ENCODE measurements at regions of chr17 and their contacts with region 1.

Region 1: DNA sequence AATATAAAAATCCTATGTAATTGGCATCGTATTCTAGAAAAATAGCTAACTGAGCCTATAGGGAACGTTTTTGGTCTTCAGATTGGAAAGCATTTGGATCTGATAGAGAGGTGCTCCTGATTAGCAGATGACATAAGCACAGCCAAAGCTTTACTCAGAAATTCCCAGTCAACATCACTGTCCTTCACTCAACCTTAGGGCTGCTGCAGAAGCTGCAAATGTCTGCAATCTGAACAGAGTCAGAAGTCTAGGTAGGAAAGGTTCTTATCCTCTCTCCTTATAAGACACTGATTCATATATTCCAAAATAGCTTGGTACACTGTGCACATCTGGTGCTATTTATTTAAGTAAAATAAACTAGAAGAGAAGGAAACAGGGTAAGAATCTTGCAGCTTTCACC is 19.2 kb downstream of the STRADA start:
- DNase-seq: peak; percentile 25
- H3K4me3 ChIP-seq: no peak overlapping the region
- H3K27ac ChIP-seq: no peak overlapping the region
- H3K4me1 ChIP-seq: peaks cover 0 to 5% of the 10 kb centered on the region in 2 experiments; a peak in 2 of 4 replicates
- H3K27me3 ChIP-seq: no peaks in the 10 kb centered on the region
- CTCF ChIP-seq: no peak
- EP300 ChIP-seq: no peak
- RAD21 ChIP-seq: no peak

Region 2: DNA sequence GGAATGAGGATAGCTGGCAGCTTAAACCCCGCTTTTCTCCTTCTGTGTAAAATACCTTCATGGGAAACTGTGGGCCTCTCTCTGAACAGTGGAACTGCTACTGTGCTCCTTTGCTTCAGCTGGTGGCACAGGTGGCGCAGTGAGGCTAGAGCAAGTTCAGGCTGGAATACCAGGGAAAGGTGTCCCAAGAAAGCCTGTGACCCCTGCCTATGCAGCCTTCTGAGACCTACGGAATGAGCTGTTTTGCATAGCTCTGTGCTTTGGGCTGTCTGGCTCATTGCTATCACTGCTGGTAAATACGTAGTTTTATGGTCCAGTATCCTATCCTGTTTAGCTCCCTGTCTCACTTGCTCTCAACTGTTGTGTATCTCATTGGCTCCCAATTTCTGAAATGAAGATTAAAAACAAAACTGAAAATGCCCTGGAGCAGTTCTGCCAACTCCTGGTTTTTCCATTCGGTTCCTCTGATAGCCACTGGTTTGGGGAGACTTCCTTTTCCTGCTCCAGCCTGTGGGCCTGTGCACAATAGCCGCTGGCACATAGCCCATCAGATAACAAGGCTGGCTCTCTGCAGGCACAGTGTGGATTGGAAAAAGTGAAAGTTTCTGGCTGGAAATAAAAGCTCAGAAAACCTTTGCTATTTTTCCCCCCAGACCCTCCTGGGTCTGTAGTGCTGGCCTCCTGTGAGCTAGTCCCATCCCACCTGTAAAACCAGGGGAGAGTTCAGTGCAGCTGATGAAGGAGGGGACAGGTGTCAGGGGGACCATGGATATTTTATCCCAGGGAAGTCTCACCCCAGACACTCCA is 46.6 kb before region 1 on chr17:
- CTCF ChIA-PET with region 1: no interaction called
- POLR2A ChIA-PET with region 1: no interaction called
- DNase-seq: peak; percentile 85
- H3K4me3 ChIP-seq: peak overlapping the region in 1 of 2 experiments; percentile 45; a peak in 3 of 4 replicates
- H3K27ac ChIP-seq: peak overlapping the region; percentile 65 to 97
- H3K4me1 ChIP-seq: peaks cover 26 to 38% of the 10 kb centered on the region in 2 experiments
- H3K27me3 ChIP-seq: no peaks in the 10 kb centered on the region
- CTCF ChIP-seq: no peak
- EP300 ChIP-seq: peak; percentile 52 to 86; a peak in 3 of 4 replicates
- RAD21 ChIP-seq: peak; percentile 42

Region 3: GRCh38 chr17:63709098-63709497 is 13.3 kb before region 1 on chr17:
- CTCF ChIA-PET with region 1: interaction called, 18 read pairs
- POLR2A ChIA-PET with region 1: interaction called, 3 read pairs
- DNase-seq: no peak
- H3K4me3 ChIP-seq: no peak overlapping the region
- H3K27ac ChIP-seq: no peak overlapping the region
- H3K4me1 ChIP-seq: peaks cover 0 to 8% of the 10 kb centered on the region in 2 experiments; a peak in 1 of 4 replicates
- H3K27me3 ChIP-seq: no peaks in the 10 kb centered on the region
- CTCF ChIP-seq: no peak
- EP300 ChIP-seq: no peak
- RAD21 ChIP-seq: no peak

Region 4: DNA sequence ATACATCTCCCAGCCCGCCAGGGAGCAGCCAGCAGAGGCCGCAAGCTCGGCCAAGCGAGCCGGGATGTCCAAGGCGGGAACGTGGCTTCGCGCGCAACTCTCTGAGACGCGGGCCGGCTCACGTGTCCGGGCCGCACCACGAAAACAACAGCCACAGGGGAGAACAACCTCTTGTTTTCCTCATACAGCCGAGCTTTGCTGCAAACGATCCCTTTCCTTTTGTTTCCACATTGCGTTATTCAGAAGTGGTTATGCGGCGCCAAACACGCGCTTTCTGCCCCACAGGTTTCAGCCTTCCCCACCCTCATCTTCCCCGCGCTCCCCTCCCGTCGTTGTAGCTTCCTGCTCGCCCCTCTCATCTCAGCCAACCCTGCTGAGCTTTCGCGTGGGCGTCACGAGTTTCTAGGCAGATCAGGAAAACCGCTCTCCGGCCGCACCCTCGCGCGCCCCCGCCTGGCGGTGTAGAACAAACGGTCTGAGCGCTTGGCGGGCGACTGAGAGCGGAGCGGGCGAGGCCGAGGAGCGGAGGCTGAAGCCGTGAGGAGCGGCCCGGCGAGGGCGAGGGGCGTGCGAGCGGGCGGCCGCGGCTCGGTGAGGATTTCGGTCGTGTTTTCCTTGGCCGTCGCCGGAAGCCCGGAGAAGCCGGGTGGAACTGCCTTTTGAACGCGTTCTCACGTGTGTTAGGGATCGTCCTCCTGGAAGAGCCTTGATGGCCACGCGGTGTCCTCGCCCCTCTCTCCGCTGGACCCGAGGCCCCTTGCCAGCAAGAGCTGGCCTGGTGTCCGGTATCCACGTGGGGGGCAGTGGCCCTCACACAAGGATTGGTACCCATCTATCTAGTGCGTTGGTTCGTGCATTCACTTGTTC is 126.7 kb after region 1 on chr17:
- CTCF ChIA-PET with region 1: no interaction called
- POLR2A ChIA-PET with region 1: no interaction called
- DNase-seq: peak; percentile 66
- H3K4me3 ChIP-seq: no peak overlapping the region; a peak in 1 of 4 replicates
- H3K27ac ChIP-seq: no peak overlapping the region
- H3K4me1 ChIP-seq: no peaks in the 10 kb centered on the region
- H3K27me3 ChIP-seq: peaks cover 2% of the 10 kb centered on the region; the same call in 1 of the 2 replicates
- CTCF ChIP-seq: no peak
- EP300 ChIP-seq: no peak
- RAD21 ChIP-seq: no peak

Measured in SK-N-SH (cell line).